ENCODE measurements at regions of chr5 and their contacts with region 1.

Region 1: GRCh38 chr5:141878711-141879425 is 658 bp upstream of the PCDH1 start:
- DNase-seq: peak; percentile 55
- H3K4me3 ChIP-seq: peak overlapping the region; percentile 71 to 82 (median 76)
- H3K27ac ChIP-seq: peak overlapping the region; percentile 88 to 90 (median 89)
- H3K4me1 ChIP-seq: peaks cover 33 to 97% (median 34%) of the 10 kb centered on the region in 3 donors
- H3K27me3 ChIP-seq: peaks cover 0 to 90% (median 17%) of the 10 kb centered on the region in 4 donors
- CTCF ChIP-seq: peak; percentile 89 to 98 (median 94)
- POLR2A ChIP-seq: no peak

Region 2: GRCh38 chr5:141701360-141702119 is 177.3 kb before region 1 on chr5:
- intact Hi-C with region 1: loop called (anchors 2 kb)
- DNase-seq: no peak
- H3K4me3 ChIP-seq: peak overlapping the region in 2 of 4 donors; percentile 50 to 73
- H3K27ac ChIP-seq: no peak overlapping the region
- H3K4me1 ChIP-seq: peaks cover 7 to 21% (median 18%) of the 10 kb centered on the region in 3 donors
- H3K27me3 ChIP-seq: peaks cover 0 to 90% (median 4%) of the 10 kb centered on the region in 4 donors
- CTCF ChIP-seq: no peak
- POLR2A ChIP-seq: no peak

Region 3: GRCh38 chr5:141811287-141812155 is 67.3 kb before region 1 on chr5:
- intact Hi-C with region 1: loop called (anchors 10 kb)
- DNase-seq: no peak
- H3K4me3 ChIP-seq: no peak overlapping the region
- H3K27ac ChIP-seq: no peak overlapping the region
- H3K4me1 ChIP-seq: peaks cover 0 to 12% (median 3%) of the 10 kb centered on the region in 3 donors
- H3K27me3 ChIP-seq: peaks cover 0 to 80% (median 2%) of the 10 kb centered on the region in 4 donors
- CTCF ChIP-seq: peak in 5 of 6 experiments; percentile 15 to 55 (median 38)
- POLR2A ChIP-seq: no peak

Region 4: DNA sequence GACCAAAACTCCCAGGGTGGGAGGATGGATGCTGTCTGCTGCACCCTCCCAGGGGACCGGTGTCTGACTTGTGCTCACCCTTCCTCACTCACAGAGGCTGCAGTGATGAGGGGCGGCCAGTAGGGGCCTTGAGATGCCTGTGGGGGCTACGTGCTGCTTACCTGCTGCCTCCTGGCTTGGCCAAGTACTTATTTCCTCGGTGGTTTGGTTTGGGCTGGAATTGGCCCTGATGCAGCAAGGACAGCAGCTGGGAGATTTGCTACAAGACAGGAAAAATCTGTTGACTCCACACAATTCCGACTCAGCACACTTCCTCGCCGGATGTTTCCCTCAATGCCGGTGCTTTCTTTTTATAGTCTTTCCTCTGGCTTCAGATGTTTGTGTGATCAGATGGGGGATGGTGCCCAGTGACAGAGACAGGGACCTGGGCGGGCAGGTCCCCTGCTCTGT is 72.5 kb after region 1 on chr5:
- intact Hi-C with region 1: loop called (anchors 10 kb)
- DNase-seq: no peak
- H3K4me3 ChIP-seq: no peak overlapping the region
- H3K27ac ChIP-seq: peak overlapping the region in 1 of 4 donors; percentile 34
- H3K4me1 ChIP-seq: peaks cover 0 to 27% (median 3%) of the 10 kb centered on the region in 3 donors
- H3K27me3 ChIP-seq: no peaks in the 10 kb centered on the region
- CTCF ChIP-seq: peak in 2 of 6 experiments; percentile 6 to 7
- POLR2A ChIP-seq: no peak

Region 5: GRCh38 chr5:142000703-142001484 is 122.0 kb after region 1 on chr5:
- intact Hi-C with region 1: no loop called
- DNase-seq: no peak
- H3K4me3 ChIP-seq: no peak overlapping the region
- H3K27ac ChIP-seq: no peak overlapping the region
- H3K4me1 ChIP-seq: peaks cover 0 to 15% (median 0%) of the 10 kb centered on the region in 3 donors
- H3K27me3 ChIP-seq: no peaks in the 10 kb centered on the region
- CTCF ChIP-seq: no peak
- POLR2A ChIP-seq: no peak

Region 6: DNA sequence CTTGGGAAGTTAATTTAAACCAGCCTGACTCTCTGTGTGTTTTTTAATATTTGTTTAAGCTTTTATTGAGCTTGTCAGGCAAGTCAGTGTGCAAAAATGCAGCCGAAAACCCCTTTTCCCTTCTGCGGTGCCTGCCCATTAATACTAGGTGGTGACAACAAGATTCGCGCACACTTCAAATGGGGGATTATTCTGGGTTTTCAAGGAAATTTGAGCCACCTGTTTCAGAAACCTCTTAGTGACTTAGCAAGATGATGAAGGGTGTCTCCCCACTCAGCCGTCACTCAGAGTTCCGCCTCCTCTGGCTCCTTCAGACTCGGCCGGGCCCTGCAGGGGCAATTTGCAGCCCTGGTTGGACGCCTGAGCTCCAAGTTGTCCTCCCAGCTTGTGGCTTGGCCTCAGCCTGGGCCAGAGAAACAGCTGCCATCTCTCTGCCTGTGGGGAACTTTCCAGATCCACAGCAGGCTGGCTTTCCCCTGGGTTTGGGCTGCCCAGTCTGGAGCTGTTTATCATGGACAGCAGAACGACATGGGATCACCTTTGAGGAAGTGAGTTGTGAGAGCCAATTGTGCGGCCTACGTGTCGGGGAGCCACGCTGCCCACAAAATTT is 370.1 kb after region 1 on chr5:
- intact Hi-C with region 1: no loop called
- DNase-seq: no peak
- H3K4me3 ChIP-seq: no peak overlapping the region
- H3K27ac ChIP-seq: peak overlapping the region in 2 of 4 donors; percentile 25 to 45
- H3K4me1 ChIP-seq: peaks cover 0 to 15% (median 3%) of the 10 kb centered on the region in 3 donors
- H3K27me3 ChIP-seq: no peaks in the 10 kb centered on the region
- CTCF ChIP-seq: no peak
- POLR2A ChIP-seq: no peak